Ascending aorta (tissue), 2 donors: ENCODE measurements at regions of chr19 and their contacts with region 1.

Region 1: GRCh38 chr19:19404879-19405860 is at the start of gene GATAD2A:
- DNase-seq: peak; percentile 77 to 96
- H3K4me3 ChIP-seq: peak within 1 kb of the TSS; percentile 91 to 99
- H3K27ac ChIP-seq: peak within 1 kb of the TSS; percentile 89 to 91
- H3K4me1 ChIP-seq: peaks cover 3 to 24% of the 10 kb centered on the region in 2 donors
- H3K27me3 ChIP-seq: no peaks in the 10 kb centered on the region
- CTCF ChIP-seq: peak; percentile 20 to 44 (median 44)
- total RNA-seq, gene GATAD2A: 63.3 TPM

Region 2: DNA sequence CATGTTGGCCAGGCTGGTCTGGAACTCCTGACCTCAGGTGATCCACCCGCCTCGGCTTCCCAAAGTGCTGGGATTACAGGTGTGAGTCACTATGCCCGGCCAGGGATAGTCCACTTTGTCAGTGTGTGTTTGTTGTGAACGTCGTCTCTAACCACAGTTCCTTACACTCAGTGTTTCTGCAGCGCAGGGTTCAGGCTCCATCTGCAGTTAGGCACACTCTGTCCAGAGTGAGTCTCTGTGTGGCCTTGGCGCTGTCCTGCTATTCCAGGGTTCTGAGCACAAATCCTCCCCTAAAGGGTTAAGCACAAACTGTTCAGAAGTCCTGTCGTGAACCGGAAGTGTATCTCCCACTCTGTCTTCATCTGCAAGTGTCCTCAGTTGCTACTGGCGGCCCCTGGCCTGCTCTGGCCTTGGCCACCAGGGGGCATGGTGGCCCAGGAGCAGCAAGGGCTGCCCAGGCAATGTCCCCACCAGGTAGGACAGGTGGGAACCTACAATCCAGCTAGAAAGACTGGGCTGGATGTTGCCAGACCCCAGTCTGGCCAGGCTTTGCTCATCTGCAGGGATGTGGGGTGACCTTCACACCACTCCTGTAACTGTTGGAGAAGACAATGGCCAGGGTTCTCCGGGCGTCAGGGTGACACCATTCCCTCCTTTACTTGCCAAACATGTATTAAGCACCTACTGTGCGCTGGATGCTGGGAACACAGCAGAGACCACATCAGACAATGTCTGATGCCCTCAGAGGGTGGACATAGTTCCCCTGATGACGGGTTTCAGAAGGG is 38.4 kb before region 1 on chr19:
- intact Hi-C with region 1: loop called (anchors 2 kb)
- DNase-seq: peak in 1 of 2 donors; percentile 84
- H3K4me3 ChIP-seq: no peak overlapping the region
- H3K27ac ChIP-seq: no peak overlapping the region
- H3K4me1 ChIP-seq: peaks cover 0 to 2% of the 10 kb centered on the region in 2 donors
- H3K27me3 ChIP-seq: no peaks in the 10 kb centered on the region
- CTCF ChIP-seq: peak; percentile 91 to 95 (median 92)

Region 3: GRCh38 chr19:19385108-19385899 is 19.9 kb before region 1 on chr19:
- intact Hi-C with region 1: loop called (anchors 1 kb)
- DNase-seq: peak; percentile 100
- H3K4me3 ChIP-seq: peak overlapping the region; percentile 77 to 89
- H3K27ac ChIP-seq: peak overlapping the region; percentile 83 to 92
- H3K4me1 ChIP-seq: peaks cover 13 to 42% of the 10 kb centered on the region in 2 donors
- H3K27me3 ChIP-seq: no peaks in the 10 kb centered on the region
- CTCF ChIP-seq: peak in 2 of 3 experiments; percentile 28 to 29

Region 4: DNA sequence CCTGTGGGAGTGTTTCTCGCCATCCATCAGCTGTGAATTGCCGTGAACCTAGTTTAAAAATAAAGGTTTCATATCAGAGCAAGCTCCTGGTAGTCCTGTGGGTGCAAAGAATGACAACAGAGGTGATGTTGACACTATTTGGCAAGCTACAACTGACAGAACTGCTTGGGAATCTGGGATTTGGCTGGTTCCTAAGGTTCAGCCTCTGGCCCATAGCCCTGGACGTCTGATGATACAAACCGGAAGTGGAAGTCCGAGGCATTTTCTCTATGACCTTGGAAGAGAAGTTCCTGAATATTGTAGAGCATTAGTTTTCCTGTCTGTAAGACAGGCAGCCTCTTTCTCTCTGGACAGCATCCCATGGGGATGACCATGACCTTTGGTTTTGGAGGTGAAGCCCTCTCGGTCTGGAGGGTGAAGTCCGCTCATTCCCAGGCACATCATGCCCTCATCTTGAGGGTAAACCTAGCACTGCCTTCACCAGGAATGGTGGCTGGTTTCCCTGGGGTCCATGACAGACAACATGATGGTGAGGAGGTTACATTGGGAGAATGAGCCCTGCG is 29.4 kb after region 1 on chr19:
- intact Hi-C with region 1: no loop called
- DNase-seq: peak in 1 of 2 donors; percentile 77
- H3K4me3 ChIP-seq: no peak overlapping the region
- H3K27ac ChIP-seq: peak overlapping the region; percentile 56 to 65
- H3K4me1 ChIP-seq: peaks cover 11 to 12% of the 10 kb centered on the region in 2 donors
- H3K27me3 ChIP-seq: no peaks in the 10 kb centered on the region
- CTCF ChIP-seq: no peak

Region 5: GRCh38 chr19:19463348-19464117 is 58.4 kb after region 1 on chr19:
- intact Hi-C with region 1: loop called (anchors 1 kb)
- DNase-seq: peak in 1 of 2 donors; percentile 74
- H3K4me3 ChIP-seq: peak overlapping the region in 1 of 2 donors; percentile 25
- H3K27ac ChIP-seq: peak overlapping the region; percentile 54 to 63
- H3K4me1 ChIP-seq: peaks cover 27 to 59% of the 10 kb centered on the region in 2 donors
- H3K27me3 ChIP-seq: no peaks in the 10 kb centered on the region
- CTCF ChIP-seq: no peak

Region 6: DNA sequence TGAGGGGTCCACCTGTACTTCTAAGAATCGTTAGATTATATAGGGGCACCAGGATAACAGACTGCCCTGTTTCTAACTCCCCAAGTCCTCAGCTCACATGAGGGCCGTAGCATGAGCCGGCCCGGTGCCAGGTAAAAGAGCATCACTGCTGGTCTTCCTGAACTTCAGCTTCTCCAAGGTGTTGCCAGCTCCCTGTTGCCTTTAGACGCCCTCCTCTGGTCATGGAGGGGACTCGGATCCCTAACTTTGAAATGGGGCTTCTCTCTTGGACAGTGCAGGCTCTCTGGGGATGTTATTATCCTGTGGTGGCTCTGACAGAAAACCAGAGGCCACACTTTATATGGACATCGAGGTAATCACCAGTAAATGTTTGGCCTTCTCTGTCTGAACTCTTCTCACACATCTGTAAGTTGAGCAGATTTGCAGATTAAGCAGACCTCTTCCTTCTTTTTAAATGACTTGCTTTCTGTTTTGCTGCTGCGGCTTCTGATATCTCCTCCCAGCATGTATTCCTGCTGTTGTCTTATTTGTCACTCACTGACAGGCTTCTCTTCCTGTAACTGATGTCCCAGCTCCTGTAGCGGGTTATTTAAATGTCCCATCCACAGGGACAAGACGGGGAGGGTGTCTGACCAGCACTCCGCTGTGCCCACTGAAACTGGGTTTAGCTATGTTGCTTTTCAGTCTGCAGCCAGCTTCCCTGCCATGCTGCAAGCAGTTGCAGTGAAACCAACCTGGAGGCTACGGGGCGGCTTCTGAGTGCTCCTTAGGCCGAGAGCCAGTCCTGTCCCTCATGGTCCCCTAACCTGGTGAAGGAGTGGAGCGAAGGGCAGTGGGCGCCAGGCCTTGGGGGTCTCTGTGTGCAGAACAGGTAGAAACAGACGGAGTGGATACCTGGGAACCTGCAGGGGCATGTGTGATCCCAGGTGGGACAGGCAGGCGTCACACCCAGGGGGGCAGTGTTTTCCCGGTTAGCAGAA is 71.0 kb after region 1 on chr19:
- intact Hi-C with region 1: loop called (anchors 5 kb)
- DNase-seq: no peak
- H3K4me3 ChIP-seq: no peak overlapping the region
- H3K27ac ChIP-seq: no peak overlapping the region
- H3K4me1 ChIP-seq: peaks cover 0 to 3% of the 10 kb centered on the region in 2 donors
- H3K27me3 ChIP-seq: no peaks in the 10 kb centered on the region
- CTCF ChIP-seq: peak in 1 of 3 experiments; percentile 30

Region 7: DNA sequence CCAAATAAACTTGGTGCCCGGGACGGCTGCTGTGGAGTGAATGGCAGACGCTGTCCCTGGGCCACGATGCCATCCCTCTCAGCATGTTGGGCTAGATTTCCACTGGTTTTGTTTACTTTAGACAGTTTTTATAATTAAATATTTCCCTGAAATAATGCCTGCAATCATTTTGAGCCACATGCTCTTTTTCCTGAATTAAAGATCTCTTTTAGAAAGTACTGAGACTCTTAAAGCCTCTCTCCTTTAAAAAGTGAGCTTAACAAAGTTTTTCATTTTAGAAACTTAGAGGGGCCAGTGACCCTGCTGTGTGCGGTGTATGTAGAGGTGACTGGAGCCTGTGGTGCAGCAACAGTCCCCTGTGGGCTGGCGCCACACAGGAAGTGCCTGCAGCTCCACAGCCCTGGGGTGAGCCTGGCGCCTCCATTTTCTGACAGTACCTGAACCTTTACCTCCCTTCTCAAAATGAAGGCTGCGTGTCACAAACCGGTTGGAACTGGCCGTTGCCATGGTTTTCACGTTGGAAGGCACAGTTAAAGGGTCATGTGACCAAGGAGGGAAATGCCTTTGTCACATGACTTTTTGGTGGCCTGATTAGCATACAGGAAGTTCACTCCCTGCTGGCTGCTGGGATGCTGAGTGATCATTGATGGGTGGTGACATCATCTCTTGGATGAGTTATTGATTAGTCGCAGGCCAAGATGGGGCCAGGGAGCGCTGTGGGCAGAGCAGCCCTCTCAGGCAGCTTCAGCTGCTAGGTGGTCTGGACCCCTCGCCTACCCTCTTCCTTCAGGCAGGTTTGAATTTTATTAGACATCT is 83.9 kb after region 1 on chr19:
- intact Hi-C with region 1: loop called (anchors 1 kb)
- DNase-seq: peak; percentile 76 to 93
- H3K4me3 ChIP-seq: peak overlapping the region; percentile 13 to 41
- H3K27ac ChIP-seq: peak overlapping the region; percentile 86 to 96
- H3K4me1 ChIP-seq: peaks cover 15 to 28% of the 10 kb centered on the region in 2 donors
- H3K27me3 ChIP-seq: no peaks in the 10 kb centered on the region
- CTCF ChIP-seq: no peak